PC-9 (cell line): ENCODE measurements at regions of chr3 and their contacts with region 1.

Region 1: DNA sequence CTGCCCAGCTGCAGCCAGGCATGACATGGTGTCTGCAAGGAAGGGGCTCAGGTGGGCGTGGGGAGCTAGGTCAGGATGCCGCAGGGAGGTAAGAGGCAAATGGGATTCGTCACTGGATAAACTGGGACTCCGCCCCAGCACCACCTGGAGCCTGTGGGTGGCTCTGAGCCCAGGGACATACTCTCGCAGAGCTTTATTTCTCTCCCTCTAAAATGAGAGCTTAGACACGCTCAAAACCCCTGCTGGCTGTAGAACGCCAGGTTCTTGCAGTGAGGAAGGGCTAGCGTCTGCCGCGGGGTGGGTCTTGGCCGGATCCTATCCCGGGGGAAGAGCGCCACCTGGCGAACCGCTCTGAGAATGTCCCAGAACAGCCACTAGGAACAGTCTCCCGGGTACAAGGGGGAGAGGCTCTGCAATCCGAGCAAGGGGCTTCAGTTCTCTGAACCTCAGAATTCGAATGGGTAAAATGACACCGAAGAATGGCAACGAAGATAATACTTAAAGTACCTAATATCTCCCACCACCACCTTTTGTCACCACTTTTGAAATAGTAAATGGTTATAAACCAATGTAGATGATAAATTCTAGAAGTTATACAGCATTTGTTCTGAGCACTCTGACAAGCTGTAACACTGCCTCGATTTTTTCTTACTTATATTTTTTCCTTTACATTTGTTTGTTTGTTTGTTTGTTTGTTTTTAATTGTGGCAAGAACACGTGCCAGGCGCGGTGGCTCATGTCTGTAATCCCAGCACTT is 53.2 kb upstream of the SRGAP3 start:
- DNase-seq: peak; percentile 61 to 83
- H3K4me3 ChIP-seq: no peak overlapping the region
- H3K27ac ChIP-seq: no peak overlapping the region
- H3K4me1 ChIP-seq: 0 out of 2 replicates have a peak, but pooled peaks cover 4% of the 10 kb centered on the region
- H3K27me3 ChIP-seq: no peaks in the 10 kb centered on the region
- CTCF ChIP-seq: peak; percentile 94

Region 2: DNA sequence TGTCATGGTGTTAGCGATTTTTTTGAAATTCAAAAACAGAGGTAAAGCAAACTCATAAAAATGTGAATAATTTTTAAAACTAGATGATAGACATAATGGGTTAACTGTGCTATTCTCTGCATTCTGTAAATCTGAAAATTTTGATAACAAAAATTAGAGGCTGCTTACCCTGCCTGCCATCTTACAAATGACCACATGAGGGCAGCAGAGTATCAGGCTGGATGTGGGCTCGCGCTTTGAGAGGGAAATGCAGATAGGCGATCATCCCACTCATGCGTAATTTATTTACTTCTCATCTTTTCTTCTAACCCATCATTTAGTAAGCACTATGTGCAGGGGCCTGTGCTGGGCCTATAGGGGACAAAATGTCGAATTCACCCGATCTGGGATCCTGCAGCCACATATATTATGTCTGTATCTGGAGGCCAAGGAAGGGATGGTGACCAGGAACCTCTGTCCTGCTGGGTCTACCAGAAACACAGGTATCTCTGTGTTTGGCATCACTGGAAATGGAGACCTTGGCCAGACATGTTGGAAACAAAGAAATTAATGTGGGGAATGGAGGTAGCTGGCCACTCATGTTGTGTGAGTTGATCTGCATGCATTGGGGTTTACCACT is 331.5 kb before region 1 on chr3:
- CTCF ChIA-PET with region 1: interaction called, 11 read pairs
- POLR2A ChIA-PET with region 1: no interaction called
- intact Hi-C with region 1: loop called (anchors 1 kb)
- DNase-seq: peak; percentile 38 to 65
- H3K4me3 ChIP-seq: no peak overlapping the region
- H3K27ac ChIP-seq: no peak overlapping the region
- H3K4me1 ChIP-seq: no peaks in the 10 kb centered on the region
- H3K27me3 ChIP-seq: no peaks in the 10 kb centered on the region
- CTCF ChIP-seq: peak; percentile 98

Region 3: DNA sequence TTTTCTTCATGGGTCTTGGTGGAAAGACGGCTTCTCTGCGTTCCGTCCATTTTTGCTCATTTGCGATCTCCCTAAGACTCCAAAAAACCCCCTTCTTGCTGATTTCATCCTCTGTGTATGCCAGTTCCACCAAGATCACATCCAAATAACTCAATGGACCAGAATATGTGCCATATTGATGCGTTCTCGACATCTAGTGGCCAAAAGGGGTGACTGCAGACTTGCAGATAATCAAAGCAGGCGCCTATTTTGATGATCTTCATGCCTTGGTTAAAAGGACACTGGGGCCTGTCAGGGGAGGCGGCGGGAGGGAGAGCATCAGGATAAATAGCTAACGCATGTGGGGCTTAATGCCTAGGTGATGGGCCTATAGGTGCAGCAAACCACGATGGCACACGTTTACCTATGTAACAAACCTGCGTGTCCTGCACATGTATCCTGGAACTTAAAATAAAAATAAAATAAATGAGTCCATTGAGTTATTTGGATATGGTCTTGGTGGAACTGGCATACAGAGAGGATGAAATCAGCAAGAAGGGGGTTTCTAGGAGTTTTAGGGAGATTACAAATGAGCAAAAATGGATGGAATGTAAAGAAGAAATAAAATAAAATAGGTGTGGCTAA is 235.1 kb before region 1 on chr3:
- CTCF ChIA-PET with region 1: no interaction called
- POLR2A ChIA-PET with region 1: no interaction called
- intact Hi-C with region 1: loop called (anchors 1 kb)
- DNase-seq: peak in 1 of 2 experiments; percentile 33
- H3K4me3 ChIP-seq: no peak overlapping the region
- H3K27ac ChIP-seq: no peak overlapping the region
- H3K4me1 ChIP-seq: no peaks in the 10 kb centered on the region
- H3K27me3 ChIP-seq: no peaks in the 10 kb centered on the region
- CTCF ChIP-seq: peak; percentile 96

Region 4: GRCh38 chr3:9249273-9250192 is 53.1 kb before region 1 on chr3 and contains the start of gene SRGAP3:
- CTCF ChIA-PET with region 1: interaction called, 4 read pairs
- POLR2A ChIA-PET with region 1: no interaction called
- intact Hi-C with region 1: loop called (anchors 1 kb)
- DNase-seq: peak; percentile 80 to 88
- H3K4me3 ChIP-seq: peak within 1 kb of the TSS; percentile 62
- H3K27ac ChIP-seq: no peak within 1 kb of the TSS
- H3K4me1 ChIP-seq: peaks cover 30% of the 10 kb centered on the region
- H3K27me3 ChIP-seq: no peaks in the 10 kb centered on the region
- CTCF ChIP-seq: 0 out of 2 replicates have a peak, but pooled peaks have one; percentile 27
- total RNA-seq, gene SRGAP3: 12.9 and 17.5 TPM in 2 replicates

Region 5: GRCh38 chr3:11155341-11156025 is 1852.9 kb after region 1 on chr3:
- CTCF ChIA-PET with region 1: interaction called, 16 read pairs
- POLR2A ChIA-PET with region 1: no interaction called
- intact Hi-C with region 1: no loop called
- DNase-seq: peak; percentile 62 to 74
- H3K4me3 ChIP-seq: peak overlapping the region; percentile 68
- H3K27ac ChIP-seq: no peak overlapping the region
- H3K4me1 ChIP-seq: peaks cover 12% of the 10 kb centered on the region; the same call in 1 of the 2 replicates
- H3K27me3 ChIP-seq: no peaks in the 10 kb centered on the region
- CTCF ChIP-seq: peak; percentile 76